ENCODE measurements at regions of chr3 and their contacts with region 1.

Region 1: GRCh38 chr3:99199021-99199420 is 297.5 kb upstream of the DCBLD2 start:
- DNase-seq: no peak
- ATAC-seq: no peak
- H3K4me3 ChIP-seq: no peak overlapping the region
- H3K27ac ChIP-seq: no peak overlapping the region
- H3K4me1 ChIP-seq: no peaks in the 10 kb centered on the region
- H3K27me3 ChIP-seq: no peaks in the 10 kb centered on the region
- CTCF ChIP-seq: no peak
- POLR2A ChIP-seq: no peak
- RAD21 ChIP-seq: no peak

Region 2: DNA sequence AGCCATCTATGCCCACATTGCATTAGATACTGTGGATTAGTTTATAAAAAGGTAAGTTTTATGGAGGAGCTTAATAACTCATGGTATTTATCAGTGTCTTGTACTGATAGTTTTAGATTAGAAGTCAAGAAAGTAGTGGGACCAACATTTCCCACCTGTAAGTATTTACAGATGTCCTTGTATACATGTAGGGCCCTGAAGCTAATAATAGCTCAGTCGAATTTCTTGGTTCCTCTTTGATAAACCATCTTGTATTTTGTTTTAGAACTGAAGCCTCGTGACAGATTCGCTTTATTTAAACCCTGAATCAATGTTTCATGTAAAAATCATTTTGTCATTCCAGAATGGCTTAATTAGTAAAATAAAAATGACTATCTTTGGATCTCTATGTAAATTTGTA is 1303.8 kb before region 1 on chr3:
- CTCF ChIA-PET with region 1: no interaction called
- POLR2A ChIA-PET with region 1: no interaction called
- dilution Hi-C with region 1: no loop called
- in situ Hi-C with region 1: no loop called
- intact Hi-C with region 1: no loop called
- DNase-seq: no peak
- ATAC-seq: no peak
- H3K4me3 ChIP-seq: no peak overlapping the region
- H3K27ac ChIP-seq: no peak overlapping the region
- H3K4me1 ChIP-seq: no peaks in the 10 kb centered on the region
- H3K27me3 ChIP-seq: no peaks in the 10 kb centered on the region
- CTCF ChIP-seq: no peak
- POLR2A ChIP-seq: no peak
- RAD21 ChIP-seq: no peak

Region 3: GRCh38 chr3:99084826-99085225 is 114.2 kb before region 1 on chr3:
- CTCF ChIA-PET with region 1: interaction called, 11 read pairs
- POLR2A ChIA-PET with region 1: no interaction called
- dilution Hi-C with region 1: no loop called
- in situ Hi-C with region 1: no loop called
- intact Hi-C with region 1: no loop called
- DNase-seq: no peak
- ATAC-seq: no peak
- H3K4me3 ChIP-seq: no peak overlapping the region
- H3K27ac ChIP-seq: no peak overlapping the region
- H3K4me1 ChIP-seq: no peaks in the 10 kb centered on the region
- H3K27me3 ChIP-seq: peaks cover 3% of the 10 kb centered on the region
- CTCF ChIP-seq: no peak
- POLR2A ChIP-seq: no peak
- RAD21 ChIP-seq: no peak

Measured in IMR-90 (cell line).